ENCODE measurements at regions of chr2 and their contacts with region 1.

Region 1: DNA sequence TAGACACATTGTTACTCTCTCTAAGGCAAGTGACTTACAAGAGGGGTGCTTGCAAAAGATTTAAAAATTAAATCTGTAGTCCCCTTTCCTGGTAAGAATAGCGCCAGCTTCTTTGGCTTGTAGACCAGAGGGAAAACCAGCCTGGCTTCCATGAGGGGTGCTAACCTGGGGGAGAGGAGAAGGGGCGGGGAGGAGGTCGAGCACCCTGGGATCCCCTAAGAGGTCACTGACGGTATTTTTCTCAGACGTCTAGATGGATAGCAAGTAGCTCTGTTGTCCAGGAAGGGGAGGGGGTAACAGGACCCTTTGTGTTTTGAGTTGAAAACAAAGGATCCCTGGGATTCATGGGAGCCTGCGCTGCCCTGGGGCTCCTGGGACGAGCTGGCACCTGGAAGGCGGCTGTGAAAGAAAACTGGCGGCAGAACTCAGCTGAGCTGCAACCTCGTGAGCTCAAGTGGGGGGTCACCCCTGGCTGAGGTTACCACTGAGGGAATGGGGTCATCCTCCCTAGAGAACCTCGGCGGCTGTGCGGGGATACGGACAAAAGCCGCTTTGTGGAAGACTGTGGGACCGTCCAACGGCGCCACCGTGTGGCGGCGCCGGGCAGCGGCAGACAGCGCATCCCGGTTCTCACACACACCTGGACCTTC is 37.8 kb upstream of the MRPL19 start:
- DNase-seq: peak; percentile 66
- H3K4me3 Mint-ChIP-seq: no peak overlapping the region
- H3K27ac Mint-ChIP-seq: no peak overlapping the region
- H3K4me1 Mint-ChIP-seq: peaks cover 43% of the 10 kb centered on the region
- H3K27me3 Mint-ChIP-seq: no peaks in the 10 kb centered on the region
- CTCF ChIP-seq: peak; percentile 91

Region 2: DNA sequence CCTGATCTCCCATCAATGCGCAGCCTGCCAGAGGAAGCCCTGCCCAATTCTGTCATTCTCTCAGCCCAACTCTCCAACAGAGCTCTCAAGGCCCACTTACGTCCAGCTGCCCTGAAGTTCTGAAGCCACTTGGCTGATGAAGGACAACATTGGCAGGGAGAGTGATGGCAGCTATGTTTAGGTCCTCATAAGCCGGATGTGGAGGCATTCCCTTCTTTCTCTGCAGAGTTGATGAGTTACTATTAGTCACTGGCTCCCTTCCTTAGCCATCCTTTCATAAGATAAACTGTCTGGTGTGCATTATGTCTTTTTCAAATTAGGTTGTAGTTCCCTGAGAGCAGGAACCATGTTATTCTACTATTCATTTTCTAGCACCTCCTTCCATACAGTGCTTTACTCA is 386.9 kb before region 1 on chr2:
- CTCF ChIA-PET with region 1: no interaction called
- POLR2A ChIA-PET with region 1: no interaction called
- intact Hi-C with region 1: no loop called
- DNase-seq: peak; percentile 32
- H3K4me3 Mint-ChIP-seq: no peak overlapping the region
- H3K27ac Mint-ChIP-seq: no peak overlapping the region
- H3K4me1 Mint-ChIP-seq: no peaks in the 10 kb centered on the region
- H3K27me3 Mint-ChIP-seq: peaks cover 25% of the 10 kb centered on the region
- CTCF ChIP-seq: no peak

Region 3: DNA sequence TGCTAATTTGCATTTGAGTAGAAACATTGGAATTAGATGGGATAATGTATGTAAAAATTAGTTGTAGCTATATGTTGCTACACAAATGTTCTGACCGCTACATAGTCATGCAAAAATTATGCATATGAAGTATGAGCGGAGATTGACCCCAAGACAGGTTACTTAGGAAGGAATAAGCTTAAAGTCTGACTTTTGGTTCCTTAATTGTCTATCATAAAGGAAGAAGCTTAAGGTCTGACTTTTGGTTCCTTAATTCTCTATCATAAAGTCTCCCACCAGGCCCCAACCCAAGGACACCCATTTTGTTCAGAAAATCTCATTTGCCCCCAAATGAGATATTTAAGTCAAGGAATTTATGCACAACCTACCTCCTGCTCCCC is 154.6 kb before region 1 on chr2:
- CTCF ChIA-PET with region 1: interaction called, 51 read pairs
- POLR2A ChIA-PET with region 1: no interaction called
- intact Hi-C with region 1: no loop called
- DNase-seq: no peak
- H3K4me3 Mint-ChIP-seq: no peak overlapping the region
- H3K27ac Mint-ChIP-seq: no peak overlapping the region
- H3K4me1 Mint-ChIP-seq: no peaks in the 10 kb centered on the region
- H3K27me3 Mint-ChIP-seq: peaks cover 2% of the 10 kb centered on the region
- CTCF ChIP-seq: no peak

Region 4: GRCh38 chr2:75503048-75503607 is 105.7 kb before region 1 on chr2:
- CTCF ChIA-PET with region 1: interaction called, 10 read pairs
- POLR2A ChIA-PET with region 1: no interaction called
- intact Hi-C with region 1: no loop called
- DNase-seq: peak; percentile 8
- H3K4me3 Mint-ChIP-seq: no peak overlapping the region
- H3K27ac Mint-ChIP-seq: no peak overlapping the region
- H3K4me1 Mint-ChIP-seq: peaks cover 14% of the 10 kb centered on the region
- H3K27me3 Mint-ChIP-seq: no peaks in the 10 kb centered on the region
- CTCF ChIP-seq: no peak

Region 5: GRCh38 chr2:75548036-75548573 is 60.7 kb before region 1 on chr2:
- CTCF ChIA-PET with region 1: interaction called, 23 read pairs
- POLR2A ChIA-PET with region 1: interaction called, 5 read pairs
- intact Hi-C with region 1: no loop called
- DNase-seq: peak; percentile 20
- H3K4me3 Mint-ChIP-seq: no peak overlapping the region
- H3K27ac Mint-ChIP-seq: peak overlapping the region; percentile 70
- H3K4me1 Mint-ChIP-seq: peaks cover 13% of the 10 kb centered on the region
- H3K27me3 Mint-ChIP-seq: no peaks in the 10 kb centered on the region
- CTCF ChIP-seq: no peak

Region 6: DNA sequence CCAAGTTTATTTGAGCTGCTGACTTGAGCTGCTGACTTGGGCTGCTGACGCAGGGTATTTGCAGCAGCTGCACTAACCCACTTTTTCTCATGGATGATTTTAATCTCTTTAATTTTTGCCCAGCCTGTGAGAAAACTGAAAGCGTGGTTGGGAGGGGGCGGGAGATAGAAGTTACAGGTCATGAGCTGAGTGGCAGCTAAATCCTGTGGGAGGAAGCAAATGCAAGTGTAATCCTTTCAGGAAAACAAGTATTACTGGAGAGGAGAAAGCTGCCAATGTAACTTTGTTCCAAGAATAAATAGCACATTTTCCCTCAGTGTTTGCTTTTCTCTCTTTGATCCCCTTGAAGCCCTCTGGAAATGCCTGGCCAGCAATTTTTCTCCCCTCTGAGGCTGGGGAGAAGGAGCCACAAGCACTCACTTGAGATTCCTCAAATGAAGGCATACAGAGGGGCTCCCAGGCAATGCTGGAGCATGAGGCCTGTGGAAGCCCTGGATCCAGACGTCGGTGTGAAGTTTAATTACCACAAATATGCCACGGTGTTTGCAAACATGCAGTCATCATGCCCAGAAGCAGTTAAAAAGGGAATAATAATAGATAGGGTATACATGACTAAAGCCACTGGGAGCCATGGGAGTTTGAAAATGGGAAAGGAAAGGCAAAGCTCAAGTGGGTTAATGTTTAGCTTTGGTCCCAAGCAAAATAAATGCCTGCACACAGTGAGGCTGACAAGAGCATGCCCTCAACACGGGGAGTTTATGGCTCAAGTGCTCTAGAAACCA is 37.7 kb before region 1 on chr2:
- CTCF ChIA-PET with region 1: interaction called, 159 read pairs
- POLR2A ChIA-PET with region 1: interaction called, 11 read pairs
- intact Hi-C with region 1: loop called (anchors 1 kb)
- DNase-seq: no peak
- H3K4me3 Mint-ChIP-seq: no peak overlapping the region
- H3K27ac Mint-ChIP-seq: no peak overlapping the region
- H3K4me1 Mint-ChIP-seq: peaks cover 21% of the 10 kb centered on the region
- H3K27me3 Mint-ChIP-seq: no peaks in the 10 kb centered on the region
- CTCF ChIP-seq: no peak

Region 7: DNA sequence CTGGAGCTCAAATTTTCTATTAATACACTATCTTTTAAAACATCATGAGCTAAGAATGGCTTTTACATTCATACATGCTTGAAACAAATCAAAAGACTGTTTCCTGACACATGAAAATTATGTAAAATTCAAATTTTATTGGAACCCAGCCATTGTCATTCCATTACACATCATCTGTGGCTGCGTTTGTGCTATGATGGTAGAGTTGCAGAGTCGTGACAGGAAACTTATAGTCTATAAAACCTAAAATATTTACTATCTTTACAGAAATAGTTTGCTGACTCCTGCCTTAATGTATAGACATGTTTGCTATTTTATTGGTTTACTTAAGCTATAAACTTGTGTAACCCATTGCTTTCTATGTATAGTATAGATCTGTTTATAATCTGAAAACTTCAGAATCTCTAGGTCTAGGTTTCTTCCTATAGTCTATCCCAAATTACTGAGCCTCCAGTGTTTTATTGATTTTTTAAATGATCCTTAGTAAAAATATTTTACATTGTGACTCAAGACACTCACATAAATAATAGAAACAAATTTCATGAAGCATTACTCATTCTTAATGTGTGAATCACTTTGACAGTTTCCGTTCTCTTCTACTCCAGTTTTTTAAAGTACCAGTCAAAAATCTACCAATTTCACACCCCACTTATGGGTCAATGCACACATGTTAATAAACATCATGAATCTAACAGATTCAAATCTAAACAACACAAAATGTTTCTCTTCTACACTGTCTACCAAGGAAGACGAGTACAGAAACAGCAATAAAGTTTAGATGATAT is 11.3 kb after region 1 on chr2:
- CTCF ChIA-PET with region 1: interaction called, 43 read pairs
- POLR2A ChIA-PET with region 1: interaction called, 4 read pairs
- intact Hi-C with region 1: no loop called
- DNase-seq: peak; percentile 40
- H3K4me3 Mint-ChIP-seq: no peak overlapping the region
- H3K27ac Mint-ChIP-seq: peak overlapping the region; percentile 57
- H3K4me1 Mint-ChIP-seq: peaks cover 18% of the 10 kb centered on the region
- H3K27me3 Mint-ChIP-seq: no peaks in the 10 kb centered on the region
- CTCF ChIP-seq: no peak

Region 8: DNA sequence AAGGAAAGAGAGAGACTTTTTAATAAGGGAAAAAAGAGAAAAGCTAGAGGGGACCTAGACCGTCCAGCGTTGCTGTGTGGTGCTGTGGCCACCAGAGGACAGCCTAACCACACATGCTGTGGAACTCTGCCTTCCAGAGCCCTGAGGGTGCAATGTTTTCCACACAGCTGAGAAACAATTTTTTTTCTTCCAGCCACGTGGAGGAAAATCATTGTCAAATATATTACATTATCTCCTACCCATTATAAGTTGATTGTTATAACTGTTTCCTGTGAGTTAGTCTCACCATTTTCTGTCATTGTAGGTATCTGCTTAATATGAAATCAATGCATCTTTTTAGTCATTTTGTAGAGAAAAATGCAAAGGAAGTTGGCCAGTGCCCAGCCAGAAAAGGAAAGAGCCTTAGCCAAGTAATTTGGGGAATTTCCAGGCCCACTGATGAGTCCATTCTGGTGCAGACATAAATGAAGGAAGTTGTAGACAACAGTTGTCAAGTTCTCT is 31.9 kb after region 1 on chr2:
- CTCF ChIA-PET with region 1: interaction called, 23 read pairs
- POLR2A ChIA-PET with region 1: interaction called, 3 read pairs
- intact Hi-C with region 1: no loop called
- DNase-seq: peak; percentile 77
- H3K4me3 Mint-ChIP-seq: no peak overlapping the region
- H3K27ac Mint-ChIP-seq: no peak overlapping the region
- H3K4me1 Mint-ChIP-seq: peaks cover 16% of the 10 kb centered on the region
- H3K27me3 Mint-ChIP-seq: peaks cover 29% of the 10 kb centered on the region
- CTCF ChIP-seq: peak; percentile 97